Activated CD4-positive, alpha-beta memory T cell treated with anti-CD3 and anti-CD28 coated beads for 36 hours (primary cell): ENCODE measurements at regions of chr19 and their contacts with region 1.

Region 1: GRCh38 chr19:34220472-34221063 is 33.8 kb upstream of the GARRE1 start:
- DNase-seq: peak; percentile 69
- H3K4me3 Mint-ChIP-seq: no peak overlapping the region
- H3K27ac Mint-ChIP-seq: no peak overlapping the region
- H3K4me1 Mint-ChIP-seq: peaks cover 48% of the 10 kb centered on the region
- H3K27me3 Mint-ChIP-seq: no peaks in the 10 kb centered on the region

Region 2: DNA sequence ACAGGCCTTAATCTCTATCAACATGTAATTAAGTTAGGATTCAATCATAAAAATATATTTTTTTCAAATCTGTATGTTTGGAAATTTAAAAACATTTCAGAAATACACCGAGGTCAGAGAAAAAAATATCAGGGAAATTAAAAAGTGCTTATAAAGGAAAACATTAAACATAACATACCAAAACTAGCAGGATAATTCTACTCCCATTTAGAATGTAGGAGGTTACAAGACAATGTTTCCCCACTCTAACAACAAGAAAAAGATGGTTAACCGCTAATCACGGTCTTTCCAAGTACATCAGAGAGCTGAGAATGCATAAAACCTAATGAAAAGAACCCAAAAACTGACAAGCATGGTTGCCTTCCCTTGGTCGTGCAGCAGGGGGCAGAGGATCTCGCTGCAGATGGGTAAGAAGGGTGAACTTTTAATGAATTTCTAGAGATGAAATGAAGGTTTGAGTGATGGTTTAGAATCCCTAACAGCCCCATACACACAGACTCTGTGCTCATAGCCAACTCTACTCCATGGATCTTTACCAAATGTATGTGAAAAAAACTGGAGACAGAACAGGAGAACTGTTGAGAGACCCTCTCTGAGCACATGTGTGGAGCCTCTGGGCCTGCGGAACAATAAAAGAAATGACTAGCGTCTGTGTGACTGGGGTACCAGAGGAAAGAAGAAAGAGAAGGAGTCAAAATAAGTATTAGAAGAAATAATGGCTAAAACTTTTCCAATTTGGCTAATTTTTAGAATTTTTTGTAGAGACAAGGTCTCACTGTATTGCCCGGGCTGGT is 99.5 kb before region 1 on chr19:
- CTCF ChIA-PET with region 1: interaction called, 3 read pairs
- POLR2A ChIA-PET with region 1: no interaction called
- intact Hi-C with region 1: loop called (anchors 5 kb)
- DNase-seq: peak; percentile 73
- H3K4me3 Mint-ChIP-seq: no peak overlapping the region
- H3K27ac Mint-ChIP-seq: no peak overlapping the region
- H3K4me1 Mint-ChIP-seq: peaks cover 13% of the 10 kb centered on the region
- H3K27me3 Mint-ChIP-seq: peaks cover 5% of the 10 kb centered on the region

Region 3: GRCh38 chr19:34232566-34233481 is 12.3 kb after region 1 on chr19:
- CTCF ChIA-PET with region 1: interaction called, 11 read pairs
- POLR2A ChIA-PET with region 1: interaction called, 4 read pairs
- intact Hi-C with region 1: loop called (anchors 2 kb)
- DNase-seq: peak; percentile 56
- H3K4me3 Mint-ChIP-seq: no peak overlapping the region
- H3K27ac Mint-ChIP-seq: peak overlapping the region; percentile 84
- H3K4me1 Mint-ChIP-seq: peaks cover 32% of the 10 kb centered on the region
- H3K27me3 Mint-ChIP-seq: no peaks in the 10 kb centered on the region

Region 4: DNA sequence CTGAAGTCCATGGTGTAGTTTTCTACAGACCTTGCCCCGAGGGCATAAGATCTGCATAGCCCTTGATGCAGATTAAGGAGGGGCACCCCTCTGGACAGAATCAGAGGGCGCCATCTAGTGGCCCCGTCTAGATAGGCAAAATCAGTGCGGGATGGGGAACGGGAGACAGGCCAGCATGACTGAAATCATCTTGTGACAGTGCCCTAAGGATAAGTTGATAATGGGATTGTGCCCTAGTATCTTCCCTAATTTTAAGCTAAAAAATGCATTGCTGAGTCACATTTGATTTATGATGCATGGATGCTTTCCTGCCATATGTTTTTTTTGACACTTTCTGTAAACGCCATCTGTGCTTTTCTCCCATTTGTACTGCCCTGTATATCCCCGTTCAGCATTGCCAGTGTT is 125.4 kb after region 1 on chr19:
- CTCF ChIA-PET with region 1: interaction called, 22 read pairs
- POLR2A ChIA-PET with region 1: no interaction called
- intact Hi-C with region 1: loop called (anchors 2 kb)
- DNase-seq: peak; percentile 84
- H3K4me3 Mint-ChIP-seq: no peak overlapping the region
- H3K27ac Mint-ChIP-seq: no peak overlapping the region
- H3K4me1 Mint-ChIP-seq: peaks cover 17% of the 10 kb centered on the region
- H3K27me3 Mint-ChIP-seq: no peaks in the 10 kb centered on the region

Region 5: GRCh38 chr19:34351382-34351826 is 130.8 kb after region 1 on chr19:
- CTCF ChIA-PET with region 1: interaction called, 22 read pairs
- POLR2A ChIA-PET with region 1: no interaction called
- intact Hi-C with region 1: loop called (anchors 2 kb)
- DNase-seq: peak; percentile 38
- H3K4me3 Mint-ChIP-seq: peak overlapping the region; percentile 37
- H3K27ac Mint-ChIP-seq: peak overlapping the region; percentile 92
- H3K4me1 Mint-ChIP-seq: peaks cover 19% of the 10 kb centered on the region
- H3K27me3 Mint-ChIP-seq: no peaks in the 10 kb centered on the region

Region 6: GRCh38 chr19:34404109-34404897 is 183.7 kb after region 1 on chr19 and contains the start of gene PDCD2L:
- CTCF ChIA-PET with region 1: no interaction called
- POLR2A ChIA-PET with region 1: no interaction called
- intact Hi-C with region 1: no loop called
- DNase-seq: peak; percentile 95
- H3K4me3 Mint-ChIP-seq: peak within 1 kb of the TSS; percentile 90
- H3K27ac Mint-ChIP-seq: peak within 1 kb of the TSS; percentile 73
- H3K4me1 Mint-ChIP-seq: peaks cover 24% of the 10 kb centered on the region
- H3K27me3 Mint-ChIP-seq: no peaks in the 10 kb centered on the region
- total RNA-seq, gene PDCD2L: 29.8 TPM